PC-9 (cell line): ENCODE measurements at regions of chr2 and their contacts with region 1.

Region 1: DNA sequence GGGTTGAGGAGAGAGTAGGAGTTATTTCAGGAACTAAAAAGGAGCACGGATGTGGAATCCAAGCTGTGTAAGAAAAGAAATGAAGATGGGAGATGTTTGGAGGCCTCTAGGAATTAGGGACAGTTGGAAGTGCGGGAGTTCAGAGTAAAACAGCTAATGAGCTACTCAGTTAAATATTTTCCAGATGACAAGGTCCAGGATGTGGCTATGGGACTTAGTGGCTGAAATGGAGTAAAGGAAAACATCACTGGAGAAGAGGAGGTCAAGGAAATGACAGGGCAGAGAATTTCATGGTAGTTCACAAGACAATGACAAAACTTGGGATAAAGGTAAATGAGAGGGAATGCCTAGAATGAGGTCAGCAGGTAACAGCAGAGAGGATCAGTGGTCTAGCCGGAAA is 13.0 kb downstream of the GPR155 start:
- DNase-seq: no peak
- H3K4me3 ChIP-seq: no peak overlapping the region
- H3K27ac ChIP-seq: no peak overlapping the region
- H3K4me1 ChIP-seq: no peaks in the 10 kb centered on the region
- H3K27me3 ChIP-seq: no peaks in the 10 kb centered on the region
- CTCF ChIP-seq: no peak

Region 2: GRCh38 chr2:174487108-174487819 is 13.5 kb after region 1 on chr2:
- CTCF ChIA-PET with region 1: no interaction called
- POLR2A ChIA-PET with region 1: interaction called, 21 read pairs
- intact Hi-C with region 1: no loop called
- DNase-seq: peak; percentile 95 to 99
- H3K4me3 ChIP-seq: peak overlapping the region; percentile 94
- H3K27ac ChIP-seq: peak overlapping the region; percentile 45
- H3K4me1 ChIP-seq: peaks cover 12% of the 10 kb centered on the region
- H3K27me3 ChIP-seq: no peaks in the 10 kb centered on the region
- CTCF ChIP-seq: no peak

Region 3: GRCh38 chr2:174529923-174530322 is 56.1 kb after region 1 on chr2:
- CTCF ChIA-PET with region 1: no interaction called
- POLR2A ChIA-PET with region 1: no interaction called
- intact Hi-C with region 1: no loop called
- DNase-seq: no peak
- H3K4me3 ChIP-seq: no peak overlapping the region
- H3K27ac ChIP-seq: no peak overlapping the region
- H3K4me1 ChIP-seq: no peaks in the 10 kb centered on the region
- H3K27me3 ChIP-seq: peaks cover 21% of the 10 kb centered on the region
- CTCF ChIP-seq: no peak